Activated CD8-positive, alpha-beta T cell treated with anti-CD3 and anti-CD28 coated beads for 36 hours (primary cell): ENCODE measurements at regions of chr1 and their contacts with region 1.

Region 1: DNA sequence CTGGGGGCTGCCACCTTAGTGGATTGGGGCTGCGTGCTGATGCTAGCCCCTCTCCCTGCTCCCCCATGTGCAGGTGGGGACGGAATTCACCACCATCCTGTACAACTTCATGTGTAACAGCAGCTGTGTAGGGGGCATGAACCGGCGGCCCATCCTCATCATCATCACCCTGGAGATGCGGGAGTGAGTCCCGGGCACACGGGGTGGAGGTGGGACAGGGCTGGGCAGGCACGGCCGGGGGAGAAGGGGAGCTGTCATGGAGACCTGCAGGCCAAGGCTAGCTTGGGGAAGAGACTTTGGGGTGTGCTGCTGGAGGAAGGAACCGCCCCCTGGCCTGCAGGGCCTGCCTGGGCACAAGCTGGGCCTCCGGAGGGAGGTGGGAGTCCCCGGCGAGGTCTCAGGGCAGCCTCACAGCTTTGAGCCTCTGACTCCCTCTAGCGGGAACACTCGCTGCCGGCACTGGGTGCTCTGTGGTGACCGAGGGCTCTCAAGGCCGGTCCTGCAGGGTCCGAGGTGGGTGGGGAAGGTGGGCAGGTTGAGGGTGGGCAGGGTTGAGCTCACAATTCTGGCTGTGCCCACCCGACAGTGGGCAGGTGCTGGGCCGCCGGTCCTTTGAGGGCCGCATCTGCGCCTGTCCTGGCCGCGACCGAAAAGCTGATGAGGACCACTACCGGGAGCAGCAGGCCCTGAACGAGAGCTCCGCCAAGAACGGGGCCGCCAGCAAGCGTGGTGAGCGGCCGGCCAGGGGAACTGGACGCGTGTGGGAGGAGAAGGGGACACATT is 25.0 kb upstream of the CCDC27 start:
- DNase-seq: peak; percentile 54
- ATAC-seq: peak; percentile 58
- H3K4me3 Mint-ChIP-seq: no peak overlapping the region
- H3K27ac Mint-ChIP-seq: no peak overlapping the region
- H3K4me1 Mint-ChIP-seq: no peaks in the 10 kb centered on the region
- H3K27me3 Mint-ChIP-seq: no peaks in the 10 kb centered on the region
- CTCF ChIP-seq: peak; percentile 51

Region 2: GRCh38 chr1:3548156-3548893 is 178.9 kb before region 1 on chr1:
- CTCF ChIA-PET with region 1: no interaction called
- POLR2A ChIA-PET with region 1: no interaction called
- intact Hi-C with region 1: no loop called
- DNase-seq: no peak
- ATAC-seq: no peak
- H3K4me3 Mint-ChIP-seq: no peak overlapping the region
- H3K27ac Mint-ChIP-seq: no peak overlapping the region
- H3K4me1 Mint-ChIP-seq: no peaks in the 10 kb centered on the region
- H3K27me3 Mint-ChIP-seq: no peaks in the 10 kb centered on the region
- CTCF ChIP-seq: no peak

Region 3: DNA sequence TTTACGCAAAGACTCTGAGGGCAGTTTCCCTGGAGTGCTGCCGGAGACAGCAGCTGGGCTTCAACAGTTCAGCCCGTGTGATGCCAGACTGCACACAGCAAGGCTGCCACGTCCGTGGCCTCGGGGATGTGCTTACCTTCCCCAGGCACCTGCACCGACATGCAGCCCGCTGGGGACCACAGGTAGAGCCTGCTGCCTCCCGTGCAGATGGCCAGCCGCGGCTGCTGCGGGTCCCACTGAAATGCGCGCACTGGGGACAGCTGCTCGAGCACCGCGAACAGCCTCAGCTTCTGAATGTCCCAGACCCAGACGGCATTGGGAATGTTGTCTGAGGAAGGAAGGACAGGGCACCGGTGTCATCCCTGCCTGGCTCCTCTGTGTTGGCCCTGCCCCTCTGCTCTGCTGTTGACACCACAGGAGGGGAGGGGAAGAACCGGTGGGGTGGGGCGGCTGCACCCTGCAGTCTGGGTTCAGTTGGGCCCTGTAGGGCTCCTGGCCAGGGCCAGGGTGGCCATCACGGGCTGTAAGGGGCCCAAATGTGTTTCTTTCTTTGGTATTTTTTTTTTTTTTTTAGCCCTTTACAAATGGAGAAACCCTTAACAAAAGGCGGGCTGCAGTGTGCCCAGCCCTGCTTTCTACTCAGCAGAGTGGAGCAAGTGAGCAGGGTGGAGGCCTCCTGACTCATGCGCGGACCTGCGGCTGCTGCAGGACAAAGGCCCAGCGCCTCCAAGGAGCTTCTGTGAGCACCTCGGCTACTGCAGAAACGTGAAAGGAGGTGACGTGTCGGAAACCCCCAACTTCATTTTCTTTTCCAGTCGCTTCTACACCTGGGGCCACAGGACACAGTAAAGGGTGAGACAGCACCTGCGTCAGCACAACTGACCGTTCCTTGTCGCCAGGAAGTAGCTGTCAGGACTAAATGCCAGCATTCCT is 95.6 kb before region 1 on chr1:
- CTCF ChIA-PET with region 1: interaction called, 10 read pairs
- POLR2A ChIA-PET with region 1: no interaction called
- intact Hi-C with region 1: no loop called
- DNase-seq: no peak
- ATAC-seq: no peak
- H3K4me3 Mint-ChIP-seq: no peak overlapping the region
- H3K27ac Mint-ChIP-seq: no peak overlapping the region
- H3K4me1 Mint-ChIP-seq: no peaks in the 10 kb centered on the region
- H3K27me3 Mint-ChIP-seq: no peaks in the 10 kb centered on the region
- CTCF ChIP-seq: no peak